Natural killer cell (primary cell): ENCODE measurements at regions of chr1 and their contacts with region 1.

Region 1: DNA sequence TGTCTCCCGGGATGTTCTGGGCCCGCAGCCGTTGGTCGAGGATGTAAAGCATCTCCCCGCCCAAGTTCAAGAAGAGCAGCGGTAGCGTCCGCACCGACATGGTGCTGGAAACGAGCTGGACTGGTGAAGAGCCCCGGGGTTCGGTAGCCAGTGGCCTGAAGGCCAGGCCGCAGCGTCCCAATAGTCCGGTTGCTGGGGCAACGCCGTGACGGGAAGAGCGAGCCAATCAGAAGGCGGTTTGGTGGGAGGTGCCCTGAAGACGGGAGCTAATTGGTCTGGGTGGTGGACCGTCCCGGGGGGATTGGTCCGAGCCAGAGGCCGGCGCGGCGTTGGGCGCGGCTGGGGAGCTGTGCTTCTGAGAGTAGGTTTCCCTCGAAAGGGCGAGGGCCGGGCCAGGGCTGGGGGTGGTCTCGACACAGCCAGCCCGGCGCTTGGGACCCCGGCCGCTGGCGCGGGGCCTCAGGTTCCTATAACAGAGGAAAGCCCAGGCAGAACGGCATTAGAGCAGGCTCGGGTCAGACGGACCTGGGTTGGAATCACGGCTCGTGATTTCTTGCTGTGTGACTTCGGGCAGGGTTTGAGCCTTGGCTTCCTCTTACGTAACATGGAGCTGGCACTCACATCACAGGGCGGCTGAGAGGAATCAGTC is at the start of gene OSCP1:
- DNase-seq: peak; percentile 85 to 95
- ATAC-seq: peak; percentile 97 to 99 (median 98)
- H3K4me3 ChIP-seq: peak within 1 kb of the TSS; percentile 77
- H3K4me3 Mint-ChIP-seq: peak within 1 kb of the TSS; percentile 88
- H3K27ac ChIP-seq: peak within 1 kb of the TSS; percentile 92
- H3K27ac Mint-ChIP-seq: peak within 1 kb of the TSS; percentile 87 to 96
- H3K4me1 ChIP-seq: peaks cover 16% of the 10 kb centered on the region
- H3K4me1 Mint-ChIP-seq: peaks cover 14 to 19% of the 10 kb centered on the region in 2 donors
- H3K27me3 ChIP-seq: no peaks in the 10 kb centered on the region
- H3K27me3 Mint-ChIP-seq: no peaks in the 10 kb centered on the region
- CTCF ChIP-seq: no peak
- total RNA-seq, gene OSCP1: 2.3 TPM in 1 of 3 donors, not detected in the others

Region 2: DNA sequence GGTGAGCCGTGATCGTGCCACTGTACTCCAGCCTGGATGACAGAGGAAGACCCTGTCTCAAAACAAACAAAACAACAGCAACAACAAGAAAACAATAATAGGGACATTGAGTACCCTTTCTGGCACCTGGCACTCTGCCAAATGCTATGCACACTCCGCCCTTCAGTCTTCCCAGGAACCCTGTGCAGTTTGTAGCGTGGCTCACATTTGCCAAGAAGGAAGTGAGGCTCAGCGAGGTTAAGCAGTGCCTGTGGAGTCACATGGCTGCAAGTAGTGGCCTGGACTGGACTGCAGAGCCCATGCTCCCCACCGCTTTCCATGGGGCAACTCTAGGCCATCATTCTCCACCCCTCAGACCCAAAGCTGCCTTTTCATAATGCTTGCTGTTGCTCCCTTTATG is 121.7 kb before region 1 on chr1:
- intact Hi-C with region 1: no loop called
- DNase-seq: no peak
- ATAC-seq: no peak
- H3K4me3 ChIP-seq: no peak overlapping the region
- H3K4me3 Mint-ChIP-seq: no peak overlapping the region
- H3K27ac ChIP-seq: no peak overlapping the region
- H3K27ac Mint-ChIP-seq: no peak overlapping the region
- H3K4me1 ChIP-seq: peaks cover 10% of the 10 kb centered on the region
- H3K4me1 Mint-ChIP-seq: peaks cover 6 to 19% of the 10 kb centered on the region in 2 donors
- H3K27me3 ChIP-seq: no peaks in the 10 kb centered on the region
- H3K27me3 Mint-ChIP-seq: peaks cover 0 to 7% of the 10 kb centered on the region in 2 donors
- CTCF ChIP-seq: no peak

Region 3: GRCh38 chr1:36463803-36464604 is 13.6 kb after region 1 on chr1 and contains the start of gene MRPS15:
- intact Hi-C with region 1: loop called (anchors 1 kb)
- DNase-seq: peak; percentile 96 to 98
- ATAC-seq: peak; percentile 98 to 100 (median 98)
- H3K4me3 ChIP-seq: peak within 1 kb of the TSS; percentile 87
- H3K4me3 Mint-ChIP-seq: peak within 1 kb of the TSS; percentile 99
- H3K27ac ChIP-seq: peak within 1 kb of the TSS; percentile 66
- H3K27ac Mint-ChIP-seq: peak within 1 kb of the TSS; percentile 90 to 96
- H3K4me1 ChIP-seq: peaks cover 13% of the 10 kb centered on the region
- H3K4me1 Mint-ChIP-seq: peaks cover 22 to 27% of the 10 kb centered on the region in 2 donors
- H3K27me3 ChIP-seq: no peaks in the 10 kb centered on the region
- H3K27me3 Mint-ChIP-seq: no peaks in the 10 kb centered on the region
- CTCF ChIP-seq: no peak
- total RNA-seq, gene MRPS15: 28.2 to 38.2 (median 32.0) TPM

Region 4: GRCh38 chr1:36722871-36723270 is 272.5 kb after region 1 on chr1:
- intact Hi-C with region 1: no loop called
- DNase-seq: no peak
- ATAC-seq: no peak
- H3K4me3 ChIP-seq: no peak overlapping the region
- H3K4me3 Mint-ChIP-seq: no peak overlapping the region
- H3K27ac ChIP-seq: no peak overlapping the region
- H3K27ac Mint-ChIP-seq: no peak overlapping the region
- H3K4me1 ChIP-seq: no peaks in the 10 kb centered on the region
- H3K4me1 Mint-ChIP-seq: no peaks in the 10 kb centered on the region
- H3K27me3 ChIP-seq: peaks cover 2% of the 10 kb centered on the region
- H3K27me3 Mint-ChIP-seq: peaks cover 10 to 11% of the 10 kb centered on the region in 2 donors
- CTCF ChIP-seq: no peak